Colonic mucosa (tissue), 4 donors: ENCODE measurements at regions of chr19 and their contacts with region 1.

Region 1: DNA sequence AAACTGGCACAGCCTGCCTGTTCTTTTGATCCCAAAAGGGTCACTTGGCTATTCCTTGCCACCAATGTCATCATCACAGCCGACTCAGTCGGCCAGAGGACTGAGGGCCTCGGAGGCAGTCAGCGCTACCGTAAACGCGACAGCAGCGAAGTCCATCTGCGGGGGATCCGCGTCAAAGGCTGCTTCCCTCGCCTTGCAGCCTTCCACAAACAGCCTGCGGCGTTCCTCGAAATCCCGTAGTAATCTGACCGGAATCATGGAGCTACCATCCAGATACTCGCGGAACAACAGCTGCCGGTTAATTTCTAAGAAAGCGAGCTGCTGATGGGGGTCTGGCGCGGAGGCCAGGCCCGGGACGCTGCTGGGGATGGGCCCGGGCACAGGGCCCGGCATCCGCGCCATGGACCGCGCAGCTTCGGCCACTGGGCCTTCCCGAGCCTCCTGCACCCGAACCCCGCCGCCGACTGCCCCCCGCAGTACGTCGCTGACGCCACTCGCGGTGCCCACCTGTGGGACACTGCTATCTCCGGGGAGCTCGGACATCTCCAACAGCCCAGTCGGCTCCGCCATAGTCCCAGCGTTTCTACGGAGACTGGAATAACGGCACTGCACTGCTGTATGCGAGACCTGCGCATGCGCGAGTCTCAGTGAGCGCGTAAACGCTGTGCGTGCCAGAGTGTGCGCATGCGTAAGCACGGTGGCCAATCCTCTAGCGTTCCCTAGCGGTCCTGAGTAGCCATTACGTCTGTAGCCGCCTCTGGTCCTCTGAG is at the start of gene EID2B:
- DNase-seq: peak; percentile 93
- H3K4me3 ChIP-seq: peak within 1 kb of the TSS; percentile 64
- H3K27ac ChIP-seq: peak within 1 kb of the TSS; percentile 66
- H3K4me1 ChIP-seq: peaks cover 4% of the 10 kb centered on the region
- H3K27me3 ChIP-seq: no peaks in the 10 kb centered on the region
- CTCF ChIP-seq: peak; percentile 98
- total RNA-seq, gene EID2B: 0.22 to 0.56 TPM

Region 2: GRCh38 chr19:39445265-39446111 is 86.9 kb before region 1 on chr19 and contains the start of gene SUPT5H:
- intact Hi-C with region 1: loop called (anchors 10 kb)
- DNase-seq: peak; percentile 98
- H3K4me3 ChIP-seq: peak within 1 kb of the TSS; percentile 82
- H3K27ac ChIP-seq: peak within 1 kb of the TSS; percentile 91
- H3K4me1 ChIP-seq: peaks cover 6% of the 10 kb centered on the region
- H3K27me3 ChIP-seq: no peaks in the 10 kb centered on the region
- CTCF ChIP-seq: no peak
- total RNA-seq, gene SUPT5H: 76.6 to 123 TPM

Region 3: GRCh38 chr19:39474139-39474622 is 58.2 kb before region 1 on chr19:
- intact Hi-C with region 1: loop called (anchors 5 kb)
- DNase-seq: peak; percentile 53
- H3K4me3 ChIP-seq: no peak overlapping the region
- H3K27ac ChIP-seq: no peak overlapping the region
- H3K4me1 ChIP-seq: no peaks in the 10 kb centered on the region
- H3K27me3 ChIP-seq: no peaks in the 10 kb centered on the region
- CTCF ChIP-seq: peak; percentile 45

Region 4: DNA sequence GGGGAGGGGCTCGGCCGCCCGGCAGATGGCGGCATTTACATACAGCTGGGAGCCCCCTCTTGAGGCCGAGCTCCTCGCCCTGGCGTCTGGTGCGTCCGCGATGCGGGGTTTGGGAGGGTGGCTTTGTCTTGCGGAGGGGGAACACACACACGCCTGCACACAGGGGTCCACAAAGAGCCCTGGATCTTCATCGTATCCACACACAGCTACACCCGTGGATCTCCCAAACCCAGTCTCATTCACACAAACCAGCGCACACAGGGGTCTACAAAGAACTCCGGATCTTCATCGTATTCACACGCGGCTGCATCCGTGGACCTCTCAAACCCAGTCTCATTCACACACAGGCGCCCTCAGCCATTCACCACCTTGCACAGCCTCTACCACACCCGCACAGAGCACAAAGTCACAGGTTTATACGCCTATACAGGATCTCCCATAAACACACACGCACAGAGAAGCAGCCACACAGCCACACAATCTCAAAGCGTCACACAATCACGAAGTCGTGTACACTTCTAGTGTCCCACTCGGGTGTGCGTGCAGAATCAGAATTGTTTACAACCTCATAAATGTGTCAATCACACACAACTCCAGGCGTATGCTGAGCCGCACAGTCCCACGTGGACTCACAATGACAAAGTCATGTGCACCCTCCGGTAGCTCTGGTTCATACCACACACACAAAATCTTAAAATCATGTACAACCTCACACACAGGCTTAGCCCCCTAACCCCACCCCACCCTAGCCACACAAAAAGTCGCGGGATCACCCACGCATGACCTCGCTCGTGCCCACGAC is 34.2 kb before region 1 on chr19:
- intact Hi-C with region 1: loop called (anchors 5 kb)
- DNase-seq: peak; percentile 36
- H3K4me3 ChIP-seq: no peak overlapping the region
- H3K27ac ChIP-seq: no peak overlapping the region
- H3K4me1 ChIP-seq: peaks cover 18% of the 10 kb centered on the region
- H3K27me3 ChIP-seq: peaks cover 20% of the 10 kb centered on the region
- CTCF ChIP-seq: peak; percentile 46